ENCODE measurements at regions of chr18 and their contacts with region 1.

Region 1: GRCh38 chr18:1292167-1292566 is 387.5 kb downstream of the ADCYAP1 start:
- DNase-seq: no peak
- H3K4me3 ChIP-seq: no peak overlapping the region
- H3K27ac ChIP-seq: no peak overlapping the region
- H3K4me1 ChIP-seq: no peaks in the 10 kb centered on the region
- H3K27me3 ChIP-seq: no peaks in the 10 kb centered on the region
- CTCF ChIP-seq: no peak

Region 2: GRCh38 chr18:1350931-1351450 is 58.8 kb after region 1 on chr18:
- intact Hi-C with region 1: loop called (anchors 10 kb)
- DNase-seq: no peak
- H3K4me3 ChIP-seq: no peak overlapping the region
- H3K27ac ChIP-seq: no peak overlapping the region
- H3K4me1 ChIP-seq: no peaks in the 10 kb centered on the region
- H3K27me3 ChIP-seq: no peaks in the 10 kb centered on the region
- CTCF ChIP-seq: no peak